AG04449 (cell line): ENCODE measurements at regions of chr4 and their contacts with region 1.

Region 1: DNA sequence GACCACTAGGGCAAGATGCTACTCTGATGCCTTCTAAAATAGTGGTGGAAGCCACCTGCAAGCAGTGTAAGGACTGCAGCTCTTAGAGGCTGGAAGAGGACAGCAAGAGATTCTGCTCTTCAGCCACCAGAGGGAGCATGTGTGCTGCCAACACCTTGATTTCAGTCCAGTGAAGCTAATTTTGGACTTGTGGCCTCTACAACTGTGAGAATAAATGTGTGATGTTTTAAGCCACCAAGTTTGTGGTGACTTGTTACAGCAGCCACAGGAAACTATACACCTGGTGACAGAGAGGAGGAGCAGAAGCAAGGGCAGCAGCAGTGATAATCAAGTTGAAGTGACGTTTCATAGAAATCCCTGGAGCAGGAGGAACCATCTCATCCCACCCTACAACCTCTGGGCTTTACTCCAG is 55.9 kb downstream of the FGFBP1 start:
- DNase-seq: peak; percentile 38
- H3K4me3 ChIP-seq: no peak overlapping the region
- CTCF ChIP-seq: peak; percentile 91

Region 2: DNA sequence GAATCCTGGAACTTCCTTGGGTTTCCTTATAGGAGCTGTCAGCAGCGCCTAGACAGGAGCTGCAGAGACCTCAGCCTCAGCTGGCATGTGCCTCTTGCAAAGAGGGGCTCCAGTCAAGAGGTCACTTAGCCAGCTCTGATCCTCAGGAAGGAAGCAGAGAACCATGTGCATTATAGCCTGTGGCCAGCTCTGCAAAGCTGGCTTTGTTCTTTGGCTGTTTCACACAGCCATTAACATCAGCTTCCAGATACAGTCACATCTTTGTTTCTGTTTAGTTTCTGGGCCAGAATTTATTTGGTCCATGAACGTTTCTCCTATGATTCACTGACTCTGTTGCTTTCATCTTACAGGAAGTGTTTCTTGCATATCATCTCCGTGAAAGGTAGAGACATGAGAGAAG is 320.6 kb before region 1 on chr4:
- CTCF ChIA-PET with region 1: no interaction called
- POLR2A ChIA-PET with region 1: no interaction called
- DNase-seq: no peak
- H3K4me3 ChIP-seq: no peak overlapping the region
- CTCF ChIP-seq: no peak

Region 3: GRCh38 chr4:15805583-15806517 is 76.8 kb before region 1 on chr4:
- CTCF ChIA-PET with region 1: interaction called, 92 read pairs
- POLR2A ChIA-PET with region 1: no interaction called
- DNase-seq: peak; percentile 4
- H3K4me3 ChIP-seq: no peak overlapping the region
- CTCF ChIP-seq: peak; percentile 64

Region 4: DNA sequence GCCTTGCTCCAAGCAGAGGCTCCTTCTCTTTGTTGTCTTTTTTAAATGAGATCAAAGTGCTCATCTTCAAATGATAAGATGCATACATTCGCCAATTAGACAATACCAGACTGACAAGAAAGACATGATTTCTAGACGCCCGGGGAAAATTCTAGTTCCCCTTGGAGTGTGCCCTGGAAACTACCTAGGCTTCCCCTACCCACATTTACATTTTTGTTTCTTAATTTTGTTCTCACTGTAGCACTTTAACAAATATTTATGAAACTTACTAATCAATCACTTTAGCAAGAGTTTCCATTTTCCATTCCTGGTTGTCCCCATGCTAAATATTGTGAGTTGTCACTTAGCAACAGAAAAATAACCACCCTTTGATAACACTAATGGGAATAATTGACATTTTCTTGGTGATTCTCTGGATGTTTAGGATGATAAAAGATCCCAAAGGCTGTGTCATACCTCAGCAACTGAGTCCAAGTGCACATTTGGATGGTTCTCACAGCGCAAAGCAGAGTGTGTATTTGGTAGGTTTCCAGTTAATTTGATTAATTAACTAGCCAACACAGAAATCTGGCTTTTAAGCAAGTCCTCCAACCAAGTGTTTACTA is 13.8 kb before region 1 on chr4:
- CTCF ChIA-PET with region 1: interaction called, 58 read pairs
- POLR2A ChIA-PET with region 1: no interaction called
- DNase-seq: no peak
- H3K4me3 ChIP-seq: no peak overlapping the region
- CTCF ChIP-seq: no peak

Region 5: DNA sequence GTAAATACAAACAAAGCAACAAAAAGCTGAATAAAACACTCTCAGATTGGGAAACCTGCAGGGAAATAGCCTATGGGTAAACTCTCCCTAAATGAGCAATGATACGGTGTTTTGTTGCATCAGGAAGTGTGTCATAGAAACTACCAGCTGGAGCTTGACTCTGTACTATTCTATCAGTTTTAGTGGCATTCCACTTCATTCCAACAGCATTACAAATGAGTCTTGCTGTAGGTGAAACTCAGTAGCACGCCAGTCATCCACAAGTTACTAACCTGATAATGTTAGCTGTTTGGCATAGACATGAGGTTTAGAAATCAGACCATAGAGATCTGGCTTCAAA is 30.9 kb after region 1 on chr4:
- CTCF ChIA-PET with region 1: interaction called, 16 read pairs
- POLR2A ChIA-PET with region 1: no interaction called
- DNase-seq: peak; percentile 81
- H3K4me3 ChIP-seq: no peak overlapping the region
- CTCF ChIP-seq: no peak

Region 6: GRCh38 chr4:15938182-15938581 is 55.5 kb after region 1 on chr4:
- CTCF ChIA-PET with region 1: interaction called, 46 read pairs
- POLR2A ChIA-PET with region 1: no interaction called
- DNase-seq: no peak
- H3K4me3 ChIP-seq: no peak overlapping the region
- CTCF ChIP-seq: no peak

Region 7: DNA sequence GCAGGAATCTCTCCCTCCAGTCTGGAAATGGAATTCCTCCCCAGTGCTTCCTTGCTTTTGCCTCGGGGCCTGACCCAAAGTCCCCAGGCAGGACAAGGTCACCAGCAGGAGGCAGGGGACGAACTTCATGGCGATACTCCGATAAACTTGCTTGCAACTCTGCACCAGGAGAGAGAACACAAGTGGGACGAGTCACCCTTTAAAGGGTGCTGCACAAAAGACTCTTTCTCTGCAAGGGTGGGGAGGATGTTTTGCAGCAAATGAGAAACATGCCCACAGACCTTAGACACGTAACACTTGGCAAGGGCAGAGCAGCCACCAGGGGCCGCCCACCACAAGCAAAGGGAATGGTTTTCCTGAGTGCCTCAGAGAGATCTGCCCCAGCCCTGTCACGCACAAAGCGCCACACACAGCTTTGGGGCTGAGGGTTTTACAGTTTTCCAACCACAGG is 80.3 kb after region 1 on chr4 and contains the start of gene FGFBP2:
- CTCF ChIA-PET with region 1: interaction called, 81 read pairs
- POLR2A ChIA-PET with region 1: no interaction called
- DNase-seq: peak; percentile 5
- H3K4me3 ChIP-seq: no peak within 1 kb of the TSS
- CTCF ChIP-seq: peak; percentile 79